Prostate gland (tissue), 2 donors: ENCODE measurements at regions of chr2 and their contacts with region 1.

Region 1: DNA sequence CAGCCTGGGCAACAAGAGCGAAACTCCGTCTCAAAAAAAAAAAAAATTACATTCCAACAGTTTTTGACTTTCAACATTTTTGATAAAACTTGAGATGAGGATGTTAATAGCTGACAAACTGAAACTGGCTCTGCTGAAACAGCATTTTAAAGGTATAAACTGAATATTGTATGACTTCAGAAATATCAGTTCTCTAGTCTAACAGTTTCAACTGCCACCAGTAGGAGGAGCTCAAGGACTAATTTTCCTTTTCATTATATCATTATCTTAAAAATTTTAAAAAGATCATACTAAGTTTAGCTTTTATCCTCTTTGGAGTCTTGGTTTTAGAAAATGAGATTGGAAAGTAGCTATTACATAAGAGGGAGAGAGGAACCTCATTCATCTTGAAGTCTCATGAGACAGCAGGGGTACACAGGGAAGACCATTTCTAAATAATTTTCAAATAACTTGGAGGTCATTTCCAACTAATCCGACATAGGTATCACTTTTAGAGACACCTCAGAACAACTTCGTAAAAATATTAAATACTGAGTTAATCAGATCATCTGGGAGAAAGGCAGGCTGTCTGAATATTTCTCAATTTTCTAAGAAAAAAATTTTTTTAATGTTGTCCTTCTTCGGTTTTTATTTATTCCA is 37.6 kb upstream of the MCM6 start:
- DNase-seq: no peak
- H3K4me3 ChIP-seq: no peak overlapping the region
- H3K27ac ChIP-seq: no peak overlapping the region
- H3K4me1 ChIP-seq: no peaks in the 10 kb centered on the region
- H3K27me3 ChIP-seq: no peaks in the 10 kb centered on the region
- CTCF ChIP-seq: peak; percentile 34 to 72 (median 68)
- POLR2A ChIP-seq: no peak

Region 2: GRCh38 chr2:134782792-134783191 is 1131.1 kb before region 1 on chr2:
- intact Hi-C with region 1: no loop called
- DNase-seq: no peak
- H3K4me3 ChIP-seq: no peak overlapping the region
- H3K27ac ChIP-seq: no peak overlapping the region
- H3K4me1 ChIP-seq: no peaks in the 10 kb centered on the region
- H3K27me3 ChIP-seq: no peaks in the 10 kb centered on the region
- CTCF ChIP-seq: no peak
- POLR2A ChIP-seq: no peak

Region 3: GRCh38 chr2:135657806-135658582 is 255.9 kb before region 1 on chr2:
- intact Hi-C with region 1: no loop called
- DNase-seq: no peak
- H3K4me3 ChIP-seq: no peak overlapping the region
- H3K27ac ChIP-seq: no peak overlapping the region
- H3K4me1 ChIP-seq: no peaks in the 10 kb centered on the region
- H3K27me3 ChIP-seq: no peaks in the 10 kb centered on the region
- CTCF ChIP-seq: no peak
- POLR2A ChIP-seq: no peak

Region 4: GRCh38 chr2:136305517-136306192 is 391.8 kb after region 1 on chr2:
- intact Hi-C with region 1: no loop called
- DNase-seq: no peak
- H3K4me3 ChIP-seq: no peak overlapping the region
- H3K27ac ChIP-seq: no peak overlapping the region
- H3K4me1 ChIP-seq: no peaks in the 10 kb centered on the region
- H3K27me3 ChIP-seq: no peaks in the 10 kb centered on the region
- CTCF ChIP-seq: no peak
- POLR2A ChIP-seq: no peak

Region 5: GRCh38 chr2:136378712-136379595 is 465.1 kb after region 1 on chr2:
- intact Hi-C with region 1: loop called (anchors 2 kb)
- DNase-seq: peak; percentile 14
- H3K4me3 ChIP-seq: no peak overlapping the region
- H3K27ac ChIP-seq: no peak overlapping the region
- H3K4me1 ChIP-seq: no peaks in the 10 kb centered on the region
- H3K27me3 ChIP-seq: no peaks in the 10 kb centered on the region
- CTCF ChIP-seq: peak; percentile 14 to 66 (median 62)
- POLR2A ChIP-seq: no peak

Region 6: GRCh38 chr2:136384531-136385303 is 470.9 kb after region 1 on chr2:
- intact Hi-C with region 1: loop called (anchors 2 kb)
- DNase-seq: peak; percentile 20
- H3K4me3 ChIP-seq: no peak overlapping the region
- H3K27ac ChIP-seq: no peak overlapping the region
- H3K4me1 ChIP-seq: no peaks in the 10 kb centered on the region
- H3K27me3 ChIP-seq: no peaks in the 10 kb centered on the region
- CTCF ChIP-seq: peak in 3 of 4 experiments; percentile 16 to 53 (median 51)
- POLR2A ChIP-seq: no peak